ENCODE measurements at regions of chr6 and their contacts with region 1.

Region 1: GRCh38 chr6:2848851-2849250 is 7.2 kb upstream of the SERPINB1 start:
- DNase-seq: peak; percentile 86
- ATAC-seq: peak; percentile 69
- H3K4me3 Mint-ChIP-seq: peak overlapping the region; percentile 58
- H3K27ac Mint-ChIP-seq: peak overlapping the region; percentile 88
- H3K4me1 Mint-ChIP-seq: peaks cover 59% of the 10 kb centered on the region
- H3K27me3 Mint-ChIP-seq: no peaks in the 10 kb centered on the region

Region 2: DNA sequence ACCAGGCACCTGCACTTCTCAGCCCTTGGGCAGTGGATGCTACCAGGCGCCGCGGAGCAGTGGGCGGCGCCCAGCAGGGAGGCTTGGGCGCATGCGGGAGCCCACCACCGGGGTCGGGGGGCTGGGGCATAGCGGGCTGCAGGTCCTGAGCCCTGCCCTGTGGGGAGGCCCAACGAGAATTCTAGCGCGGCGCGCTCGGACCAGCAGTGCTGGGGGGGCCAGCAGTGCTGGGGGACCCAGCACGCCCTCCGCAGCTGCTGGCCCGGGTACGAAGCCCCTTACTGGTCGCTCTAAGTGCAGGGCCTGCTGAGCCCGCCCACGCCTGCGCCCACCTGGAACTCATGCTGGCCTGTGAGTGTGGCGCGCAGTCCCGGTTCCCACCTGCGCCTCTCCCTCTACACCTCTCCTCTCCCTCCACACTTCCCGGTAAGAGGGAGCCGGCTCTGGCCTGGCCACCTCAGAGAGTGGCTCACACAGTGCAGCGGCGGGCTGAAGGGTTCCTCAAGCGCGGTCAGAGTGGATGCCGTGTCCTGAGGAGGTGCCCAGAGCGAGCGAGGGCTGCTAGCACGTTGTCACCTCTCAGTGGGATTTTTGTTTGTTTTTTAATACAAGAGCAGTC is 21.3 kb after region 1 on chr6:
- CTCF ChIA-PET with region 1: interaction called, 22 read pairs
- POLR2A ChIA-PET with region 1: interaction called, 8 read pairs
- intact Hi-C with region 1: no loop called
- DNase-seq: no peak
- ATAC-seq: no peak
- H3K4me3 Mint-ChIP-seq: no peak overlapping the region
- H3K27ac Mint-ChIP-seq: no peak overlapping the region
- H3K4me1 Mint-ChIP-seq: peaks cover 69% of the 10 kb centered on the region
- H3K27me3 Mint-ChIP-seq: no peaks in the 10 kb centered on the region

Region 3: DNA sequence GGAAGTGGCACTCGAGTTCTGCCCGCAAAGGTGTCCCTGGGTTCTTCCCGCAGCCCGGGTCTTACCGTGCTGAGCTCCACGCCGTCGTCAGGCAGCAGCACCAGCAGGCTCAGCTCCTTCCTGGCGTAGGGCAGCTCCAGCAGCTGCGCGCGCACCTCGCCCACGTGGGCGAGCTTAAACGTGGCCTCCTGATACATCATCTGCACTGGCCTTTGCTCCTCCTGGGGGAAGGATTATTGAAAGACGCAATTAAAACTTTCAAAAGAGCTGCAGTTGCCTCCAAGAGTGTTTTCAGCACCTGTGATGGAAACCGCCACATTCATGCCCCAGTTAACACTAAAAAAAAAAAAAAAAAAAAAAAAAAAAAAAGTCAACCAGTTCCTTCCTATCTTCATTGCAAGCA is 42.9 kb after region 1 on chr6:
- CTCF ChIA-PET with region 1: interaction called, 11 read pairs
- POLR2A ChIA-PET with region 1: interaction called, 8 read pairs
- intact Hi-C with region 1: no loop called
- DNase-seq: peak; percentile 88
- ATAC-seq: peak; percentile 91
- H3K4me3 Mint-ChIP-seq: peak overlapping the region; percentile 73
- H3K27ac Mint-ChIP-seq: peak overlapping the region; percentile 85
- H3K4me1 Mint-ChIP-seq: peaks cover 65% of the 10 kb centered on the region
- H3K27me3 Mint-ChIP-seq: no peaks in the 10 kb centered on the region

Region 4: GRCh38 chr6:2911171-2911570 is 62.3 kb after region 1 on chr6:
- CTCF ChIA-PET with region 1: interaction called, 33 read pairs
- POLR2A ChIA-PET with region 1: no interaction called
- intact Hi-C with region 1: loop called (anchors 1 kb)
- DNase-seq: no peak
- ATAC-seq: no peak
- H3K4me3 Mint-ChIP-seq: no peak overlapping the region
- H3K27ac Mint-ChIP-seq: peak overlapping the region; percentile 52
- H3K4me1 Mint-ChIP-seq: peaks cover 45% of the 10 kb centered on the region
- H3K27me3 Mint-ChIP-seq: peaks cover 2% of the 10 kb centered on the region

Measured in activated CD4-positive, alpha-beta T cell treated with anti-CD3 and anti-CD28 coated beads for 36 hours (primary cell).